PC-9 (cell line): ENCODE measurements at regions of chr13 and their contacts with region 1.

Region 1: GRCh38 chr13:75372517-75372916 is 109.5 kb downstream of the TBC1D4 start:
- DNase-seq: peak; percentile 16 to 44
- H3K4me3 ChIP-seq: no peak overlapping the region
- H3K27ac ChIP-seq: no peak overlapping the region
- H3K4me1 ChIP-seq: no peaks in the 10 kb centered on the region
- H3K27me3 ChIP-seq: no peaks in the 10 kb centered on the region
- CTCF ChIP-seq: peak; percentile 87

Region 2: GRCh38 chr13:75489502-75490263 is 117.2 kb after region 1 on chr13:
- CTCF ChIA-PET with region 1: interaction called, 13 read pairs
- POLR2A ChIA-PET with region 1: no interaction called
- intact Hi-C with region 1: no loop called
- DNase-seq: peak; percentile 29 to 82
- H3K4me3 ChIP-seq: peak overlapping the region; percentile 44
- H3K27ac ChIP-seq: peak overlapping the region; percentile 68
- H3K4me1 ChIP-seq: peaks cover 45% of the 10 kb centered on the region
- H3K27me3 ChIP-seq: no peaks in the 10 kb centered on the region
- CTCF ChIP-seq: no peak

Region 3: DNA sequence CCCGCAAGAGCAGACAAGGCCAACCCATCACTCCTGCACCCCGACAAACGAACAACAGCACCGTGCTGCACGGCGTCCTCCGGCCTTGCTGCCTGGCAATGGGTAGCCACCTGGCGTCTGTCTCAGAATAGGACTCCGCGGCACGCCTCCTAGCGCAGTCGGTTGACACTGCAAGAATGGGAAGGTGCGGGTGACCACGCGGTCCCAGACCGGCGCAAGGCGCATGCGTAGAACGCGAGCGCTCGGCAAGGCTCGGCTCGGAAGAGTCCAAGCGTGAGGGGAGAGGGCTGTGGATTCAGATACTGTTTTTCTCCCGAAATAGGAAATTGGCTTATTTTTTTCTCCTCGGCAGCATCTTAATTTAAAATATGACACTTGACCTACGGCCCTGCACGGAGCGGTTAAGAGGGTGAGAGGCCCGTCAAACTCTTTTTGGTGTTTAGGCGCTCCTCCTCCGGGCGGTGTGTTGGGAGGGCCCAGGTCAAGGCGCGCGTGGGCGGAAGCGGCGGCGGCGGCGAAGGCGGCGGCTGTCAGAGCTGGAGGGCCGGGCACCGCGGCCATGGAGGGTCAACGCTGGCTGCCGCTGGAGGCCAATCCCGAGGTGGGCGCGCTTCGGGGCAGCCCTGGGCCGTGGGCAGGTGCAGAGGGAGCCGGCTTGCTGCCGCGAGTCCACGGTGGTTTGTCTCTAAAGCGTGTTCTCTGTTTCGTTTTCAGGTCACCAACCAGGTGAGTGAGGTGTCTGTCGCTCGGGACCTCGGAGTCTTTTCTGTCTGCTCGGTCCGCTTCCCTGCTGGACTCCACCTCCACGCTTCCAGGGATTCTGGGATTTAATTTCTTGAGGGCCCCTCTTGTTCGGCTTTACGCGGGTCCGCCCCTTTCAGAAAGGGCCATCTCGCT is 177.0 kb after region 1 on chr13 and contains the start of gene UCHL3:
- CTCF ChIA-PET with region 1: no interaction called
- POLR2A ChIA-PET with region 1: no interaction called
- intact Hi-C with region 1: loop called (anchors 2 kb)
- DNase-seq: peak; percentile 88 to 96
- H3K4me3 ChIP-seq: peak within 1 kb of the TSS; percentile 87
- H3K27ac ChIP-seq: peak within 1 kb of the TSS; percentile 66
- H3K4me1 ChIP-seq: peaks cover 44% of the 10 kb centered on the region
- H3K27me3 ChIP-seq: no peaks in the 10 kb centered on the region
- CTCF ChIP-seq: peak; percentile 83
- total RNA-seq, gene UCHL3: 39.7 and 54.9 TPM in 2 replicates

Region 4: GRCh38 chr13:75666646-75667351 is 294.3 kb after region 1 on chr13:
- CTCF ChIA-PET with region 1: no interaction called
- POLR2A ChIA-PET with region 1: interaction called, 13 read pairs
- intact Hi-C with region 1: no loop called
- DNase-seq: no peak
- H3K4me3 ChIP-seq: no peak overlapping the region
- H3K27ac ChIP-seq: no peak overlapping the region
- H3K4me1 ChIP-seq: no peaks in the 10 kb centered on the region
- H3K27me3 ChIP-seq: no peaks in the 10 kb centered on the region
- CTCF ChIP-seq: no peak